Vagina (tissue), 2 donors: ENCODE measurements at regions of chr3 and their contacts with region 1.

Region 1: GRCh38 chr3:35659768-35660167 is 20.4 kb downstream of the ARPP21 start:
- DNase-seq: no peak
- H3K4me3 ChIP-seq: no peak overlapping the region
- H3K27ac ChIP-seq: no peak overlapping the region
- H3K4me1 ChIP-seq: no peaks in the 10 kb centered on the region
- H3K27me3 ChIP-seq: no peaks in the 10 kb centered on the region
- CTCF ChIP-seq: no peak
- POLR2A ChIP-seq: no peak

Region 2: GRCh38 chr3:34582055-34582454 is 1077.7 kb before region 1 on chr3:
- intact Hi-C with region 1: loop called (anchors 5 kb)
- DNase-seq: no peak
- H3K4me3 ChIP-seq: no peak overlapping the region
- H3K27ac ChIP-seq: no peak overlapping the region
- H3K4me1 ChIP-seq: no peaks in the 10 kb centered on the region
- H3K27me3 ChIP-seq: no peaks in the 10 kb centered on the region
- CTCF ChIP-seq: no peak
- POLR2A ChIP-seq: no peak